Head of caudate nucleus (tissue), 42 donors: ENCODE measurements at regions of chr20 and their contacts with region 1.

Region 1: DNA sequence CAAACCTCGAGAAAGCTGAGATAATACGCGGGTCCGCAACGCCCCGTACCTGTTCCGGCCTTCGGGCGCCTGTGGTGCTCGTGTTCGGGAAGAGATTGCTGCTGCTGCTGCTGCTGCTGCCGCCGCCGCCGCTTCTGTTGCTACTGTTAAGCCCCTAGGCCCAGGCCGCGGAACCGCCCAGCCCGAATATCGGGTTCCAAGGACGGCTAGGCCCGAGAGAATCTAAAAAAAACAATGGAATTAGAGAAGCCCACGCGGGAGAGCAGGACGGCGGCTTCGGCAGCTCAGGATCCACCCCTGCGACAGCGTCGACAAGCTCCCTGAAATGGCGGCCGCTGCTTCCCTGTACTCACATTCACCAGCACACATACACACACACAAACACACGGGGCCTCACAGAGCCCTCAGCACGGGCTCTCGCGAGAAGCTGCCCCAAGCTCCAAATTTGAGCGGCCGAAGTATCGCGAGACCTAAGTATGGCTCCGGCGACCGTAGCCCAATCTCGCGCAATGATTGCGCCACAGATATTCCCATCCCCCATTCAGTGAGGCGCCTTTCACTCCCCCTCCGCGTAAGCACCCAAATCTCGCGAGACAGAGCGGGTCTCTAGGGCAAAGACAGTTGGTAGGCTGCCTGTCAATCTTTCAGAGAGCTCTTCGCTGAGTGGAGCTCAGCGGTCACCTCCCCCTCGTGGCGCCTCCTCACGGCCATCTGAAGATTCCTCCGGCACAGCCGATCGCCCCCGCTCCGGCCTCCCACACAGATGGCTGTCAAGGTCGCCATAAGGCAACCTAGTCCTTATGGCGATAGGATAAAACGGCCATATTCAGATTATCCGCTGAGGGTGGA is at the start of gene RBM39:
- DNase-seq: peak; percentile 96 to 100 (median 99)

Region 2: DNA sequence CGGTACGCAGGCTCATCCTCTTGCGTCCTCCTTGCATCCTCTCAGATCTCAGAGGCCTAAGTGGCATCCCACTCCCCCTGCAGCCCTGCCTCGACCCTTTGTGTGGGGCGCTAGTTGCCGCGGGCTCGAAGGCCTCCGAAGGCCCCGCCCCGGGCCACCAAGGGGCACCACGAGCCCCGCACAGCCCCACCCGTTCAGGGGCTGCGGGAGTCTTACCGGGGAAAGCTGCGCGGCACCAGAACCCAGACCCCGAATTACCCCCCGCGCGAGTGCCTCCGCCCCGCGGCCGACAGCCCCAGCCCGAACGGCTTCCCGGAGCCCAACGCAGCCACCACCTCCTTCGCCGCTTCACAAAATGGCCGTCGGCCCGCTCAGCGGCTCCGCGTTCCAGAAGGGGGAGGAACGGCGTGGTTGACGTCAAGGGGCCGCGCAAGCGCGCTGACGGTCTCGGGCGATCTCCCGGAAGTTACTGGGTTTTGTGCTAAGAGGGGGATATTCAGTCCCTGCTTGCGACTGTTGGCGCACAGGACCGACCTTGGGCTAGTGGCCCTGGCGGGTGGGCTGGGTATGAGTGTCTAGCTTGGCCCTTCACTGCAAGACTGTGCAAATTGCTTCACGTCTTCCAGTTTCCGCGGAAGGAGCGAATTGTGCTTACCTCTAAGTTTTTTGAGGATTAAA is 77.4 kb before region 1 on chr20 and contains the starts of genes CPNE1 and RBM12:
- intact Hi-C with region 1: loop called (anchors 5 kb)
- DNase-seq: peak; percentile 85 to 97 (median 94)

Region 3: GRCh38 chr20:35771689-35772562 is 29.8 kb after region 1 on chr20 and contains the start of gene PHF20:
- intact Hi-C with region 1: loop called (anchors 5 kb)
- DNase-seq: peak; percentile 99 to 100 (median 100)

Region 4: DNA sequence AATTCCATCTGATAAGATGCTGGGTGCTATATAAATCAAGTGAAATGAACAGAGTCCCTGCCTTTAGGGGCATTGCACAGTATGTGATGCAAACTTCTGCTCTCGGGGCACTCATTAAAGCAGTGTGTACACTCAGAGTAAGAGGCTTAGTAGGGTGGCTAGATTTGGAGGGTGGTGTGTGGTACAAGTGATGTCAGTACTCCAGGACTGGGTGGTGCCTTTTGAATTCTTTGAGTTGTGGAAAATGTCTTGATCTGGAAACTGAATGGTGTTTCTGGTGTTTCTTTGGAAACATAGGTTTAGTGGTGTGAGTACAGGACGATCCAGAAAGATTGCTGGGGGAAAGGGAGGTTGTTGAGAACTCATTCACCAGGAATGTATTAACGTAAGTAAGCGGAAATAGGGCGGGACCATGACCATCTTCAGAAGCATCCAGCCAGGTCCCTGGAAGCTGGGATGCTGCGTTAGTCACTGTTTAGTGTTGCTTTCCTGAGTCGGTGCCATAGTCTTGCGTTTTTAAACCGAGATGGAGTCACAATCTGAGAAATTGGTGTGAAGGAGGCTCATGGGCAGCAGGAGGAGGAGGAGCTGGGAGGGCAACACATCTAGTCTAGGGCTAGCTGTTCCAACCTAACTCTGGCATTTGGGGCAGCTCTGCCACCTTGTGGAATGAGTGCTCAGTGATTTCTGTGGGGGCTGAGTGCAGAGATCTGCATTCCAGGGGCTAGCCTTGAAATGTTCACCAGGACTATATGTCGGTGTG is 141.8 kb after region 1 on chr20:
- intact Hi-C with region 1: loop called (anchors 10 kb)
- DNase-seq: peak; percentile 53 to 90 (median 78)

Region 5: GRCh38 chr20:35947489-35947888 is 205.4 kb after region 1 on chr20:
- intact Hi-C with region 1: loop called (anchors 10 kb)
- DNase-seq: no peak